Cardiac septum (tissue), 1 donor: ENCODE measurements at regions of chr3 and their contacts with region 1.

Region 1: GRCh38 chr3:135965506-135966270 is at the start of gene PPP2R3A:
- DNase-seq: peak; percentile 93
- total RNA-seq, gene PPP2R3A: 82.8 TPM

Region 2: GRCh38 chr3:136022529-136023263 is 57.0 kb after region 1 on chr3:
- intact Hi-C with region 1: loop called (anchors 2 kb)
- DNase-seq: no peak

Region 3: DNA sequence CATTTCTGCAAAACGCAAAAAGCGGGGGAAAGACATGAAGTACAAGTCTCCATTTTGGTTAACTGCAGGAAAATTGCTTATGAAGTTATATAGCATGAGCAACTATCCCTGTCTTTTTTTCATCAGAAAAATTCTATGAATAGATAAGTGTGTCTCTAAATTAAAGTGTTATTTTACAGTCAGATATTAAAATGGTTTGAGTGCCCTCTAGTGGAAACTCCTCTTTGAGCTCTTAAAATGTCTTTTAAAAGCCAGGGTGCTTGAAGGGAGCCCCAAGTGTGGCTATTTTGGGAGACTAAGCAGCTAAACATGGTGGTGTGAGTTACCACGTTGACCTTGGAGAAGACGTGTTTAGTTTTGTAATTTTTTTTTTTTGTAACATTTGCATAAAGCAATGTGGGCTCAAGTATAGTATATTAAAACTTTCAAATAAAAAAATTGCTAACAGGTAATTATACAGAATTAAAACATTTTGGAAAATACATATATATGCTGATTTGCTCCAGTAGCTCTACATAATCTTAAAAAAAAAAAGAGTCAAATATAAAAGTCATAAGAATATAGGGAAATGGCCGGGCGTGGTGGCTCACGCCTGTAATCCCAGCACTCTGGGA is 77.0 kb after region 1 on chr3:
- intact Hi-C with region 1: loop called (anchors 5 kb)
- DNase-seq: no peak

Region 4: DNA sequence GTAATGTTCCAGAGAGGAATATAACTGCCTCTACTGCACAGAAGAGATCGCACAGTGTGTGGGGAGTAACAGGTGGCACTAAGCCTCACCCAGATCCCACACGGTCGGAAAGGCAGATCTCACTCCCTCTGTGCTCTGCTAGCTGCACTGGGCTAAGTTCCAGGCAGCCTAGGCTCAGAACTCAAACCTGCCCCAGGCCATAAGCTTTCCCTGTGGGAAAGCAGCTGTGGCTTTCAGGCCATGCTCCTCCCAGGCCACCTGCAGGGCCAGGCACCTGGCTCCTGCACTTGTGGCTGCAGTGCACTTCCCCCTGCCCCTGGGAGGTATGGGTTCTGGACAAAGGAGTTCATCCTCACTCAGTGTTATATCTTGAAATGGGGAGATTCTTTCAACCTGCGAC is 311.9 kb after region 1 on chr3:
- intact Hi-C with region 1: no loop called
- DNase-seq: no peak